ENCODE measurements at regions of chr11 and their contacts with region 1.

Region 1: DNA sequence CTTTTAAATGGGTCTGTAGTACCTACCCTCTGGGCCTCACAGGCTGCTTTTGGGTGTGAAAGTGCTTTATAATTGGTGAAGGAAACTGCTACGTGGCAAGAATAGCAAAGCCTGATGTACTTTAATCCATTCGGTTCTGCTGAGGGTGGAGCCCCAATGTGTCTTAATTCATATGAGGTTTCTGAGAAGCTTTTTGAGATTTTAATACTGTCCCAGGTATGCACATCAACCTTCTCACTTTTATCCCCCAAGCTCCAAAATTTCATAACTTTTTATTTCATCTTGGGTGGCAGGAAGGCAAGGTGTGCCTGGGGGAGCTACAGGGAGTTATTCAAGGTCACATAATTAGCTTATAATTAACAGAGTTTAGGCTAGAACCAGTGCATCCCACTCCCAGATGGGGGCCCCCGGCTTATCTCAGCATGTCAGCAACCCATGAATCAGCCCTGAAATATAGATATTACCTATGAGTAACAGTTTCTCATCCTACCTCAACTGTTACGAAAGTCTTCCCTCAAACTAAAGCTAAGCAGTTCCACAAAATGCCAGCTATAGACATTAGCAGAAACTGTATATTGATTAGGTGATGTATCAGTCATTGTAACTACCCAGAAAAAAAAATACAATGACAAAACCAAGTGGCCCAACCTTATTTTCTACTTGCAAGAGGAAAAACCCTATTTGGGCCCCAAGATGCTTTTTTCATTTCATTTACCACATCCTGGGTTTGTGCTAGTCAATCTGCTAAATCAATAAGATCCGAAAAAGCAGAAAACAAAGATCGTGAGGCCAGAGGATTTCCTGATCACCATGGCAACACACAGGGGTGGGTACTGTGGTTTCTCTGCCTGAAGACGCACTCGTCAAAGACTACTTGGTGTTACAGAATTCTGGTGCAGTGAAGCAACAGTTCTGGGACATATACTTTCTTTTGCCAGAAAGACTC is 26.7 kb downstream of the CD44 start:
- DNase-seq: peak; percentile 69 to 99 (median 87)
- ATAC-seq: peak; percentile 66
- H3K4me3 ChIP-seq: peak overlapping the region; percentile 31 to 34
- H3K4me3 Mint-ChIP-seq: peak overlapping the region; percentile 74
- H3K27ac ChIP-seq: peak overlapping the region; percentile 96 to 97
- H3K27ac Mint-ChIP-seq: peak overlapping the region; percentile 100
- H3K4me1 ChIP-seq: peaks cover 97% of the 10 kb centered on the region
- H3K4me1 Mint-ChIP-seq: peaks cover 100% of the 10 kb centered on the region
- H3K27me3 ChIP-seq: no peaks in the 10 kb centered on the region
- H3K27me3 Mint-ChIP-seq: no peaks in the 10 kb centered on the region
- CTCF ChIP-seq: no peak

Region 2: GRCh38 chr11:34997952-34998528 is 167.7 kb before region 1 on chr11:
- CTCF ChIA-PET with region 1: interaction called, 46 read pairs
- POLR2A ChIA-PET with region 1: no interaction called
- intact Hi-C with region 1: loop called in 1 of 2 experiments (anchors 1 kb)
- DNase-seq: peak in 2 of 9 experiments; percentile 38 to 54
- ATAC-seq: peak; percentile 58
- H3K4me3 ChIP-seq: no peak overlapping the region
- H3K4me3 Mint-ChIP-seq: no peak overlapping the region
- H3K27ac ChIP-seq: no peak overlapping the region
- H3K27ac Mint-ChIP-seq: peak overlapping the region; percentile 49
- H3K4me1 ChIP-seq: peaks cover 6% of the 10 kb centered on the region
- H3K4me1 Mint-ChIP-seq: peaks cover 14% of the 10 kb centered on the region
- H3K27me3 ChIP-seq: no peaks in the 10 kb centered on the region
- H3K27me3 Mint-ChIP-seq: no peaks in the 10 kb centered on the region
- CTCF ChIP-seq: peak; percentile 95

Region 3: GRCh38 chr11:35047179-35047578 is 118.5 kb before region 1 on chr11:
- CTCF ChIA-PET with region 1: interaction called, 7 read pairs
- POLR2A ChIA-PET with region 1: interaction called, 8 read pairs
- intact Hi-C with region 1: loop called (anchors 1 to 2 kb)
- DNase-seq: peak in 8 of 9 experiments; percentile 26 to 92 (median 68)
- ATAC-seq: peak; percentile 62
- H3K4me3 ChIP-seq: no peak overlapping the region
- H3K4me3 Mint-ChIP-seq: peak overlapping the region; percentile 36
- H3K27ac ChIP-seq: peak overlapping the region; percentile 53 to 96
- H3K27ac Mint-ChIP-seq: peak overlapping the region; percentile 100
- H3K4me1 ChIP-seq: peaks cover 69% of the 10 kb centered on the region
- H3K4me1 Mint-ChIP-seq: peaks cover 80% of the 10 kb centered on the region
- H3K27me3 ChIP-seq: no peaks in the 10 kb centered on the region
- H3K27me3 Mint-ChIP-seq: no peaks in the 10 kb centered on the region
- CTCF ChIP-seq: no peak

Region 4: GRCh38 chr11:35144136-35144741 is 21.5 kb before region 1 on chr11:
- CTCF ChIA-PET with region 1: interaction called, 92 read pairs
- POLR2A ChIA-PET with region 1: interaction called, 32 read pairs
- intact Hi-C with region 1: loop called (anchors 1 kb)
- DNase-seq: peak in 8 of 9 experiments; percentile 35 to 89 (median 70)
- ATAC-seq: peak; percentile 51
- H3K4me3 ChIP-seq: peak overlapping the region; percentile 37 to 46
- H3K4me3 Mint-ChIP-seq: peak overlapping the region; percentile 79
- H3K27ac ChIP-seq: peak overlapping the region; percentile 54 to 77
- H3K27ac Mint-ChIP-seq: peak overlapping the region; percentile 98
- H3K4me1 ChIP-seq: peaks cover 70% of the 10 kb centered on the region
- H3K4me1 Mint-ChIP-seq: peaks cover 80% of the 10 kb centered on the region
- H3K27me3 ChIP-seq: no peaks in the 10 kb centered on the region
- H3K27me3 Mint-ChIP-seq: no peaks in the 10 kb centered on the region
- CTCF ChIP-seq: no peak

Region 5: DNA sequence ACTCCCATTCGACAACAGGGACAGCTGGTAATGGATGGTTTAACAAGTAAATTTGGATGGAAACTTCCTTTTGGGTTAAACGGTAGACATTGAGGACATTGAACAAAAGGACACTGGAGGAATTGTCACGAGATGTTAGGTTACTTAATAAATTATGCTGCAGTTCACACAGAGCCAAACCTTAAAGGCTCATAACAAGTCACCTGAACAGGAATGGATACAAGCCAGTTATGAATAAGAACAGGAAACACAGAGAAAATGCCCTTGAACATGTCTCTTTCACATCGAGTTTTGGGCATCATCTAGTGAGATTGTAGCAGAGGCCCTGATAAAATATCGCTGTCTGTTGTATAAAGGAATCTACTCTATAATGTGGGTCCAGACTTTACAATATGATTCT is 38.9 kb after region 1 on chr11:
- CTCF ChIA-PET with region 1: no interaction called
- POLR2A ChIA-PET with region 1: no interaction called
- intact Hi-C with region 1: no loop called
- DNase-seq: no peak
- ATAC-seq: no peak
- H3K4me3 ChIP-seq: no peak overlapping the region
- H3K4me3 Mint-ChIP-seq: no peak overlapping the region
- H3K27ac ChIP-seq: no peak overlapping the region
- H3K27ac Mint-ChIP-seq: peak overlapping the region; percentile 63
- H3K4me1 ChIP-seq: peaks cover 14% of the 10 kb centered on the region
- H3K4me1 Mint-ChIP-seq: peaks cover 73% of the 10 kb centered on the region
- H3K27me3 ChIP-seq: no peaks in the 10 kb centered on the region
- H3K27me3 Mint-ChIP-seq: no peaks in the 10 kb centered on the region
- CTCF ChIP-seq: no peak

Region 6: DNA sequence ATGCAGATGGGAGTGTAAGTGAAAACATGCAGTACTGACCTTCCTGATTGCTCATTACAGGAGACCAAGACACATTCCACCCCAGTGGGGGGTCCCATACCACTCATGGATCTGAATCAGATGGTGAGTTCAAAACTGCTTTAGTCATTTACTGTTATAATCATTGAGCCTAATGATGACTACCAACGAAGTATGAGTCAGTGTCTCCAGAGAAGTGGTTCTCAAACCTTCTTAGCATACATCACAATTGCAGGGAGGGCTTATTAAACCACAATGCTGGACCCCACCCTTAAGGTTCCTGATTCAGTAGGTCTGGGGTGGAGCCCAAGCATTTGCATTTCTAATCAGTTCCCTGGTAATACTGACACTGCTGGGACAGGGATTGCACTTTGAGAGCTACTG is 49.1 kb after region 1 on chr11:
- CTCF ChIA-PET with region 1: interaction called, 8 read pairs
- POLR2A ChIA-PET with region 1: no interaction called
- intact Hi-C with region 1: loop called in 1 of 2 experiments (anchors 2 kb)
- DNase-seq: peak in 2 of 9 experiments; percentile 25 to 51
- ATAC-seq: peak; percentile 33
- H3K4me3 ChIP-seq: no peak overlapping the region
- H3K4me3 Mint-ChIP-seq: no peak overlapping the region
- H3K27ac ChIP-seq: peak overlapping the region in 1 of 2 experiments; percentile 50
- H3K27ac Mint-ChIP-seq: peak overlapping the region; percentile 92
- H3K4me1 ChIP-seq: peaks cover 43% of the 10 kb centered on the region
- H3K4me1 Mint-ChIP-seq: peaks cover 74% of the 10 kb centered on the region
- H3K27me3 ChIP-seq: no peaks in the 10 kb centered on the region
- H3K27me3 Mint-ChIP-seq: no peaks in the 10 kb centered on the region
- CTCF ChIP-seq: no peak

Region 7: GRCh38 chr11:35305670-35306382 is 140.1 kb after region 1 on chr11:
- CTCF ChIA-PET with region 1: interaction called, 57 read pairs
- POLR2A ChIA-PET with region 1: no interaction called
- intact Hi-C with region 1: no loop called
- DNase-seq: peak; percentile 18 to 76 (median 53)
- ATAC-seq: peak; percentile 73
- H3K4me3 ChIP-seq: peak overlapping the region; percentile 12 to 39
- H3K4me3 Mint-ChIP-seq: peak overlapping the region; percentile 79
- H3K27ac ChIP-seq: peak overlapping the region in 1 of 2 experiments; percentile 29
- H3K27ac Mint-ChIP-seq: peak overlapping the region; percentile 92
- H3K4me1 ChIP-seq: peaks cover 18% of the 10 kb centered on the region
- H3K4me1 Mint-ChIP-seq: peaks cover 16% of the 10 kb centered on the region
- H3K27me3 ChIP-seq: no peaks in the 10 kb centered on the region
- H3K27me3 Mint-ChIP-seq: no peaks in the 10 kb centered on the region
- CTCF ChIP-seq: peak; percentile 63

Region 8: GRCh38 chr11:35714882-35715627 is 549.4 kb after region 1 on chr11:
- CTCF ChIA-PET with region 1: no interaction called
- POLR2A ChIA-PET with region 1: no interaction called
- intact Hi-C with region 1: no loop called
- DNase-seq: peak in 2 of 9 experiments; percentile 18 to 27
- ATAC-seq: no peak
- H3K4me3 ChIP-seq: no peak overlapping the region
- H3K4me3 Mint-ChIP-seq: no peak overlapping the region
- H3K27ac ChIP-seq: no peak overlapping the region
- H3K27ac Mint-ChIP-seq: peak overlapping the region; percentile 18
- H3K4me1 ChIP-seq: no peaks in the 10 kb centered on the region
- H3K4me1 Mint-ChIP-seq: peaks cover 57% of the 10 kb centered on the region
- H3K27me3 ChIP-seq: no peaks in the 10 kb centered on the region
- H3K27me3 Mint-ChIP-seq: no peaks in the 10 kb centered on the region
- CTCF ChIP-seq: no peak

Measured in CD8-positive, alpha-beta T cell (primary cell).